ENCODE measurements at regions of chr10 and their contacts with region 1.

Region 1: GRCh38 chr10:110009736-110010475 is 2.1 kb downstream of the ADD3 start:
- DNase-seq: no peak
- H3K4me3 ChIP-seq: peak overlapping the region; percentile 91 to 97
- H3K27ac ChIP-seq: peak overlapping the region; percentile 53 to 98
- H3K4me1 ChIP-seq: peaks cover 0 to 50% (median 21%) of the 10 kb centered on the region in 4 donors
- H3K27me3 ChIP-seq: no peaks in the 10 kb centered on the region
- CTCF ChIP-seq: no peak

Region 2: DNA sequence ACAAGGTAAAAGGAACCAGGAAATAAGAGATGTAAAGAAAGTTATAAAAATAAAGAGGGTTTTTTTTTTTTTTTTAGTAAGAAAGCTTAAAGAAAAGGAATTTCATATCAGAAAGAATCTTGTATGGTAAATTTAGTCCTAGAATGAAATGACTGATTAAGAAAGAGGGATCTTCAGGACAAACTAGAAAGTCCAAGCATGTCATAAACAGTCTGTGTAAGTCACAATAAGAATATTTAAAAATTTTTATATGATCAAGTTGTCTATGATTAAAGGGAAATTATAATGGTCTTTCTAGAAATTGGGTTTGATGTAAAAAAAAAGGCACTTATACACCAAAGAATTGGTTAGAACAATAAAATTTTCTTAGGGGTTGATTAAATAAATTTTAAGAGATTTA is 376.1 kb before region 1 on chr10:
- intact Hi-C with region 1: no loop called
- DNase-seq: no peak
- H3K4me3 ChIP-seq: no peak overlapping the region
- H3K27ac ChIP-seq: no peak overlapping the region
- H3K4me1 ChIP-seq: no peaks in the 10 kb centered on the region
- H3K27me3 ChIP-seq: no peaks in the 10 kb centered on the region
- CTCF ChIP-seq: no peak

Region 3: GRCh38 chr10:109895095-109895818 is 114.6 kb before region 1 on chr10:
- intact Hi-C with region 1: loop called (anchors 5 kb)
- DNase-seq: peak; percentile 85 to 92
- H3K4me3 ChIP-seq: no peak overlapping the region
- H3K27ac ChIP-seq: peak overlapping the region; percentile 84 to 85
- H3K4me1 ChIP-seq: peaks cover 0 to 100% (median 82%) of the 10 kb centered on the region in 4 donors
- H3K27me3 ChIP-seq: no peaks in the 10 kb centered on the region
- CTCF ChIP-seq: no peak